Motor neuron (in vitro differentiated cells): ENCODE measurements at regions of chr7 and their contacts with region 1.

Region 1: DNA sequence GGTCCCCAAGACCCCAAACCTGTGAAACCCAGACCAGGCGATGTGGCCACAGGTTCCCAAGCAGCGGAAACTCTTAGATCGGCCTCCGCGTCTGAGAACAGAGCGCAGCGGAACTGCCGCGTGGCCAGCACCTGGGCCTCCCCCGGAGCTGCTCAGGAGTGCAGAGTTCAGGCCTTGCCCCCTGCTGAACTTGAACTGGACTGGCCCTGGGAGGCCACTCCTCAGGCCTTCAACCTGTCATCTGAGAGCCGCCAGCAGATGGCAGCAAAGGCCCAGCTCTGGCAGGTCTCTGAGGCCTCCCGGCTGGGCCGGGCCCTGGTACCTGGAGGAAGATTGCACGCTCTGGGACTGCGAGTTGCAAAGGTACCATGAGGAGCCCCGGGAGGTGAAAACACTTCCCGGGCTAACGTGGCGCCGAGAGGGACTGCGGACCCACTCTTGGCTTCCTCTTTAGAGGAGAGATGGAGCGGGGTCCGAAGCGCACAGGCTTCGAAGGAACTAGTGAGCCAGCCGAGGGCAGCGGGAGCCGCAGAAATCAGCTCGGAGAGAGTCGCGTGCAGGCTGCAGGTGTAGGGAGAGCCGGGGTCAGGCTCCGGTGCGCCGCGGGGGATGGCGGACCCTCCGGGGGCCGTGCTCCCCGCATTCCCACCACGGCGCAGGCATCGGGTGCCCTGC is 89.1 kb downstream of the PAXIP1 start:
- ATAC-seq: peak; percentile 97 to 100 (median 99)
- H3K4me3 ChIP-seq: no peak overlapping the region
- H3K27ac ChIP-seq: no peak overlapping the region
- H3K4me1 ChIP-seq: no peaks in the 10 kb centered on the region

Region 2: GRCh38 chr7:154383045-154383444 is 530.7 kb before region 1 on chr7:
- in situ Hi-C with region 1: no loop called
- ATAC-seq: no peak
- H3K4me3 ChIP-seq: no peak overlapping the region
- H3K27ac ChIP-seq: no peak overlapping the region
- H3K4me1 ChIP-seq: no peaks in the 10 kb centered on the region

Region 3: GRCh38 chr7:155190688-155191087 is 276.9 kb after region 1 on chr7:
- in situ Hi-C with region 1: loop called in 1 of 9 experiments (anchors 25 kb)
- ATAC-seq: peak; percentile 35 to 81 (median 60)
- H3K4me3 ChIP-seq: peak overlapping the region in 2 of 5 donors; percentile 8 to 17
- H3K27ac ChIP-seq: no peak overlapping the region
- H3K4me1 ChIP-seq: peaks cover 8 to 12% of the 10 kb centered on the region in 2 donors

Region 4: DNA sequence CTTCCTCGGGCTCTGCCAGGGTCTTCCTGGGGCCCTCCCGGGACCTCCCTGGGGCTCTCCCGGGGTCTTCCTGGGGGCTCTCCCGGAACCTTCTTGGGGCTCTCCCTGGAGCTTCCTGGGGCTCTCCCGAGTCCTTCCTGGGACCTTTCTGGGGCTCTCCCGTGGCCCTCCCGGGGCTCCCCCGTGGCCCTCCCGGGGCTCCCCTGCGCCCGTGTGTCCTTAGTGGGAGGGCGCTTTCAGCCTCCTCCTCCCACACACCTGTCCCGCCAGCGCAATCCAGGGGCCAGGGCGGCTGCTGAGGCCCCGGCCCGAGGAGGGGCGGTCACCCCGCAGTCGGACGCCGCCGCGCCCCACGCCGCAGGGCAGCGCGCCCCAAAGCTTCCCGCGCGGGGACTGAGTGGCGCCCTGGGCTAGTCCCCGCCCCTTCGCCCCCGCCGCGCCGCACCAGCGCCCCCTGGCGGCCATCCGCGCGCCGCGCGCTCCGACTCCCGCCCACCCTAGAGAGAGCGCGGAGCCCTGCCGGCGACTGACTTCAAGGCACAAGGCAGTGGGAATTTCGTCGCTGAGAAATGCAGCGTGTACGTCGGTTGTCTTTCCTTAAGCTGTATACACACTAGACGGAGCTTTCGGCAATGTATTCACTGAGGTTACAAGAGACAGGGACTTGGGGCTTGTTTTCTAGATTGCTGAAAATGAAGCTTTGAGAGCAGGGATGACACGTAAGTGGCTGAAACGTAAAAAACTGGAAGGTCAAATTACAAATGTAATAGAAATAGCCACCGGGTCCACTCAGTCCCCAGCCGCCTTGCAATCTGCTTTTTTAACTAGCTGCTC is 431.0 kb after region 1 on chr7:
- in situ Hi-C with region 1: loop called in 4 of 9 experiments (anchors 25 kb)
- ATAC-seq: peak; percentile 97 to 99 (median 98)
- H3K4me3 ChIP-seq: peak overlapping the region; percentile 20 to 45 (median 34)
- H3K27ac ChIP-seq: no peak overlapping the region
- H3K4me1 ChIP-seq: peaks cover 0 to 4% of the 10 kb centered on the region in 2 donors

Region 5: GRCh38 chr7:155356323-155357105 is 442.7 kb after region 1 on chr7:
- in situ Hi-C with region 1: loop called in 1 of 9 experiments (anchors 25 kb)
- ATAC-seq: peak in 2 of 8 experiments; percentile 40 to 69
- H3K4me3 ChIP-seq: no peak overlapping the region
- H3K27ac ChIP-seq: no peak overlapping the region
- H3K4me1 ChIP-seq: no peaks in the 10 kb centered on the region